ENCODE measurements at regions of chr17 and their contacts with region 1.

Region 1: DNA sequence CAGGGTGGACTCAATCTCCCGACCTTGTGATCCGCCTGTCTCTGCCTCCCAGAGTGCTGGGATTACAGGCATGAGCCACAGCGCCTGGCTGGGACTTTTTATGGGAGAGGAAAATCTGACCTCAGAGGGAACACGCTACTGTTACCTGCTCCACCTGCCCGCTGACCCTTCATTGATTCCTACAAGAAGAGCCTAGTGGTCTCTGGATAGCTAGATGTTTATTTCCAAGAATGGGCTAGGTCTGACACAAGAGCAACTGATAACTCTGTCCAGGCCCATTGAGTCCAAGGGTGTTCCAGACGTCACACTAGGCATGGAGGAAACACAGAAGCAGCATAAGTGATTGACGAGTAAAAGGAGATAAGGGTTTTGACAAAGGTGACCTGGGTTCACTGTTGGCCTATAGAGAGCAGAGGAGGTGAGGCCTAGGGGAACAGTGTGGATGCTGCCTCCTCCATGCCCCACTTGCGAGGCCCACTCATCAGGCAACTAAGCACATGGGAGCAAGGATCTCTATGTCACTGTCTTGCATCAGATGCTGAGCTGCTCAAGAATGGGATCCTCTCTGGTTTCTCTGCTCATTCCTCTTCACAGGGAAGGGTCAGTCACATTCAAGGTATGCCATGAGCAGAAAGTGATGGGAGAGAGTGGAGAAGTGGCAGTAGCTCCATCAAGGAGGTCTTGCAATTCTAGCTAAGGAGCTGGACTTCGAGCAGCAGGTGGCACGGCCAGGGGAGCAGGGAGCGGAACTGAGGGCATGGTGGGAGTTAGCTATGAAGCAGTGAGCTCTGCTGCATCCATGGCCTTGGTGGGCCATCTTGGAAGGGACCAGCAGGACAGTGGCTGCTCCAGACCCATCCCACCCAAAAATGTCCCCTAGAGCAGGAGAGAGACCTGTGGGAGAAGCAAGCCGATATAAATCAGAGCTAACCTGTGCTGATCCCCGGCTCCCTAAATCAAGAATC is 145.2 kb downstream of the WSCD1 start:
- DNase-seq: no peak
- H3K4me3 ChIP-seq: no peak overlapping the region
- H3K27ac ChIP-seq: no peak overlapping the region
- H3K4me1 ChIP-seq: no peaks in the 10 kb centered on the region
- H3K27me3 ChIP-seq: peaks cover 0 to 22% of the 10 kb centered on the region in 2 donors
- CTCF ChIP-seq: no peak
- POLR2A ChIP-seq: no peak

Region 2: DNA sequence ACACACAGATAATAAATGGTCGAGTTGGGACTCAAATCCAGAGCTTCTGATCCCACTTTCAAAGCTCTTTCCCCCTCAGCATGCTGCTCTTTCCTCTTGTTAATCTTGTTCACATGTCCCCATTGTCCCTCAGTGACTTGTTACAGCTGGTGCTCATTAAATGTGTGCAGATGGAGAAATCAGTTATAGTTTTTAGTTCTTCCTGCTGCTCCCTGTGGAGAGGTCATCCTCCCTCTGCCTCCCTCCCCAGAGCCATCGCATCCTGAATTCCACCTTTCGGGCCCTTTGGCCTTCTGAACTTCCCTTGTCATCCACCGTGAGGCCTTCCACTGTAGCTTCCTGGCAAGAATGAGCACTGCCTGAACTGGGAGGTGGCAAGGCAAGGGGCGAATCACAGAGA is 34.4 kb after region 1 on chr17:
- intact Hi-C with region 1: no loop called
- DNase-seq: no peak
- H3K4me3 ChIP-seq: no peak overlapping the region
- H3K27ac ChIP-seq: no peak overlapping the region
- H3K4me1 ChIP-seq: no peaks in the 10 kb centered on the region
- H3K27me3 ChIP-seq: peaks cover 0 to 3% of the 10 kb centered on the region in 2 donors
- CTCF ChIP-seq: no peak
- POLR2A ChIP-seq: no peak

Region 3: GRCh38 chr17:6269478-6269877 is 54.1 kb after region 1 on chr17:
- intact Hi-C with region 1: loop called (anchors 2 kb)
- DNase-seq: no peak
- H3K4me3 ChIP-seq: no peak overlapping the region
- H3K27ac ChIP-seq: no peak overlapping the region
- H3K4me1 ChIP-seq: no peaks in the 10 kb centered on the region
- H3K27me3 ChIP-seq: no peaks in the 10 kb centered on the region
- CTCF ChIP-seq: no peak
- POLR2A ChIP-seq: no peak